ENCODE measurements at regions of chr22 and their contacts with region 1.

Region 1: GRCh38 chr22:45309472-45310227 is at the start of gene FAM118A:
- DNase-seq: peak; percentile 88 to 100 (median 95)
- H3K4me3 ChIP-seq: peak within 1 kb of the TSS; percentile 76 to 80
- H3K4me3 Mint-ChIP-seq: peak within 1 kb of the TSS; percentile 86 to 94 (median 90)
- H3K27ac ChIP-seq: peak within 1 kb of the TSS; percentile 82
- H3K27ac Mint-ChIP-seq: peak within 1 kb of the TSS; percentile 94 to 97 (median 95)
- H3K4me1 ChIP-seq: peaks cover 41% of the 10 kb centered on the region
- H3K4me1 Mint-ChIP-seq: peaks cover 38 to 54% (median 46%) of the 10 kb centered on the region in 4 donors
- H3K27me3 ChIP-seq: no peaks in the 10 kb centered on the region
- H3K27me3 Mint-ChIP-seq: no peaks in the 10 kb centered on the region
- total RNA-seq, gene FAM118A: 119 to 122 TPM

Region 2: GRCh38 chr22:45240810-45241631 is 68.6 kb before region 1 on chr22 and contains the start of gene KIAA0930:
- CTCF ChIA-PET with region 1: no interaction called
- POLR2A ChIA-PET with region 1: no interaction called
- intact Hi-C with region 1: loop called (anchors 2 kb)
- DNase-seq: peak; percentile 67 to 88 (median 73)
- H3K4me3 ChIP-seq: peak within 1 kb of the TSS; percentile 57 to 62
- H3K4me3 Mint-ChIP-seq: peak within 1 kb of the TSS; percentile 90 to 96 (median 92)
- H3K27ac ChIP-seq: peak within 1 kb of the TSS; percentile 36
- H3K27ac Mint-ChIP-seq: peak within 1 kb of the TSS; percentile 87 to 96 (median 90)
- H3K4me1 ChIP-seq: peaks cover 21% of the 10 kb centered on the region
- H3K4me1 Mint-ChIP-seq: peaks cover 10 to 51% (median 22%) of the 10 kb centered on the region in 4 donors
- H3K27me3 ChIP-seq: no peaks in the 10 kb centered on the region
- H3K27me3 Mint-ChIP-seq: no peaks in the 10 kb centered on the region
- total RNA-seq, gene KIAA0930: 27.9 to 36.7 TPM

Region 3: DNA sequence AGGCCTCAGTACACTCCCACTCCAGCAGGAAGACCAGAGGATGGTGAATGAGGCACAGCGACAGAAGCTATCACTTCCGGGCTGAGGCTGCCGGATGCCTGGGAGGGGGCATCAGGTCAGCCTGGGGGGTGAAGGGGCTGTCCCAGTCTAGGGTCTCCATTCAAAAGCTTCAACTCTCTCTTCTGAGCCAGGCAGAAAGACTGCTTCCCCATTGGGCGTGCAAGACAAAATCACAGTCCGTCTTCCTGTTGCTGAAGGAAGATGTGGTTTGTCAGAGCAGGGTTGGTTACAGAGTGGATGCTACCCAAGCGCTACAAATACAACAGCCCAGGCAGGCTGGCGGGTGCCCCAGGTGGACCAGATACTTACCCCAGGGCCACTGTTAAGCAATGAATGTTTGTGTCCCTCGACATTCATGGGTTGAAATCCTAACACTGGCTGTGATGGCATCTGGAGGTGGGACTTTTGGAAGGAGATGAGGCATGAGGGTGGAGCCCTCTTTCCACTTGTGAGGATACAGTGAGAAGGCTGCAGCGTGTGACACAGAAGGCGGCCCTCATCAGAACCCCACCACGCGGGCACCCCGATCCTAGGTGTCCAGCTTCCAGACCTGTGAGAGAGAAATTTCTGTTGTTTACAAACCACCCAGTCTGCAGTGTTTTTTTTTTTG is 12.9 kb before region 1 on chr22:
- CTCF ChIA-PET with region 1: interaction called, 3 read pairs
- POLR2A ChIA-PET with region 1: interaction called, 30 read pairs
- intact Hi-C with region 1: no loop called
- DNase-seq: peak in 4 of 5 donors; percentile 56 to 66 (median 64)
- H3K4me3 ChIP-seq: peak overlapping the region in 1 of 2 donors; percentile 33
- H3K4me3 Mint-ChIP-seq: peak overlapping the region in 7 of 8 donors; percentile 37 to 74 (median 49)
- H3K27ac ChIP-seq: peak overlapping the region; percentile 57
- H3K27ac Mint-ChIP-seq: peak overlapping the region; percentile 80 to 94 (median 91)
- H3K4me1 ChIP-seq: peaks cover 21% of the 10 kb centered on the region
- H3K4me1 Mint-ChIP-seq: peaks cover 10 to 25% (median 12%) of the 10 kb centered on the region in 4 donors
- H3K27me3 ChIP-seq: no peaks in the 10 kb centered on the region
- H3K27me3 Mint-ChIP-seq: no peaks in the 10 kb centered on the region

Region 4: DNA sequence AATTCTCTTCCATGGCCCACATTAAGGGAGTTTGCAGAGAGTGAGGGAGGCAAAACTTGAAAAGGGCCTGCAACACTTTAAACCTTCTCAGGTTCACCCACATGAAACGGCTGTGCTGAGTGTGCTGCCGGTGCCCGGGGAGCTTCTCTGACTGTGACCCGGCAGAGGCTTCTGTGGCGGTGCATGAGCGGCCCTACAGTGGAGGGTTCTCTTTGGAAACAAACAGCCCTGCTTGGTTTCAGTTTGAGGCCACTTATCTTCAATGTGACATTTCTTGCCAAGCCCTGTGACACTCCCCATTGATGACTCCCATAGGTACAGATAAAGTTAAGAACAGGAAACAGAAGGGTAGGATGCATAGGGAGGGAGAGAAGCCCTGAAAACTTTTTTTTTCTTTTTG is 31.8 kb after region 1 on chr22:
- CTCF ChIA-PET with region 1: no interaction called
- POLR2A ChIA-PET with region 1: no interaction called
- intact Hi-C with region 1: no loop called
- DNase-seq: peak; percentile 50 to 59 (median 53)
- H3K4me3 ChIP-seq: no peak overlapping the region
- H3K4me3 Mint-ChIP-seq: peak overlapping the region in 3 of 8 donors; percentile 27 to 58 (median 49)
- H3K27ac ChIP-seq: no peak overlapping the region
- H3K27ac Mint-ChIP-seq: peak overlapping the region; percentile 57 to 88 (median 80)
- H3K4me1 ChIP-seq: peaks cover 9% of the 10 kb centered on the region
- H3K4me1 Mint-ChIP-seq: peaks cover 6 to 13% (median 8%) of the 10 kb centered on the region in 4 donors
- H3K27me3 ChIP-seq: no peaks in the 10 kb centered on the region
- H3K27me3 Mint-ChIP-seq: no peaks in the 10 kb centered on the region

Measured in CD4-positive, alpha-beta memory T cell (primary cell).